ENCODE measurements at regions of chr1 and their contacts with region 1.

Region 1: GRCh38 chr1:150925816-150926741 is at the start of gene SETDB1:
- DNase-seq: peak; percentile 96 to 99 (median 98)
- H3K4me3 ChIP-seq: peak within 1 kb of the TSS; percentile 71 to 88 (median 75)
- H3K4me3 Mint-ChIP-seq: peak within 1 kb of the TSS; percentile 94 to 95
- H3K27ac ChIP-seq: peak within 1 kb of the TSS; percentile 83 to 92
- H3K27ac Mint-ChIP-seq: peak within 1 kb of the TSS; percentile 97 to 99 (median 99)
- H3K4me1 ChIP-seq: peaks cover 19 to 27% of the 10 kb centered on the region in 2 donors
- H3K4me1 Mint-ChIP-seq: peaks cover 27% of the 10 kb centered on the region
- H3K27me3 ChIP-seq: no peaks in the 10 kb centered on the region
- H3K27me3 Mint-ChIP-seq: peaks cover 0 to 3% (median 1%) of the 10 kb centered on the region in 3 donors
- CTCF ChIP-seq: no peak
- polyA plus RNA-seq, gene SETDB1: 13.9 to 69.4 (median 15.5) TPM

Region 2: DNA sequence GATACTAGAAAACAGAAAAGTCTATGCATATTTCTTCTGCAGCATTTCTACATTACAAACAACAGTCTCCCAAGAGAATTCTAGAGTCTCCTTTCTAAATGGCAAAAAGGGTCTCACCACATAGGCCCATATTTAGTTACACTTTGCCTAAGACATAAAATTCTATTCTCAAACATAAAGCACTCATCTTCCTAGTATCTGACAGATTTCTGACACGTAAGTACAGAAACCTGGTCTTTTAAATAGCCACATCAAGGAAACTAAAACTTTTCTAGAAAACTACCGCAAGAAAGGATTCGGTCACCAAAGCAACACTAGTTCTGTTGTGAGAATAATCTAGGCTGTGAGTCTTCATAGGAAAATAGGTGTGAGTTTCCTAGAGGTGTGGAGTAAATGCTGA is 84.5 kb before region 1 on chr1:
- intact Hi-C with region 1: loop called in 1 of 2 experiments (anchors 2 kb)
- DNase-seq: no peak
- H3K4me3 ChIP-seq: no peak overlapping the region
- H3K4me3 Mint-ChIP-seq: no peak overlapping the region
- H3K27ac ChIP-seq: peak overlapping the region in 1 of 2 donors; percentile 58
- H3K27ac Mint-ChIP-seq: peak overlapping the region in 4 of 7 donors; percentile 7 to 33 (median 25)
- H3K4me1 ChIP-seq: peaks cover 34 to 35% of the 10 kb centered on the region in 2 donors
- H3K4me1 Mint-ChIP-seq: peaks cover 37% of the 10 kb centered on the region
- H3K27me3 ChIP-seq: no peaks in the 10 kb centered on the region
- H3K27me3 Mint-ChIP-seq: no peaks in the 10 kb centered on the region
- CTCF ChIP-seq: no peak

Region 3: DNA sequence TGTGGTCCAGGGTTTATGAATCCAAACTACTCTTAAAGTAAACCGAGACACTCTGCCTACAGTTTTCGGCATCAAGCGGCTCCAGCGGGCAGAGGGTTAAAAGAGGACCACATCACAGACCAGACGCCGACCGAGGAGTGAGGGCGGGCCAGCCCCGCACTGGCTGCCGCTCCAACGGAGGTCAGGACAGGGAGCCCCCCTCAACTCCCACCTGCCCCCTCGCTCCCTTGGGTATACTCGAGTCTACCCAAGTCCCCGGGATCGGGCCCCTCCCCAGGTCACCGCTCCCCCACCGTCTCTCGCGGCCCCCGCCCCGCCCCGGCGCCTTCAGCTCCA is 50.0 kb before region 1 on chr1:
- intact Hi-C with region 1: loop called (anchors 2 to 5 kb)
- DNase-seq: peak in 1 of 3 donors; percentile 24
- H3K4me3 ChIP-seq: peak overlapping the region; percentile 95 to 98 (median 98)
- H3K4me3 Mint-ChIP-seq: peak overlapping the region; percentile 86 to 93
- H3K27ac ChIP-seq: peak overlapping the region; percentile 81 to 91
- H3K27ac Mint-ChIP-seq: peak overlapping the region; percentile 90 to 97 (median 94)
- H3K4me1 ChIP-seq: peaks cover 35 to 42% of the 10 kb centered on the region in 2 donors
- H3K4me1 Mint-ChIP-seq: peaks cover 42% of the 10 kb centered on the region
- H3K27me3 ChIP-seq: no peaks in the 10 kb centered on the region
- H3K27me3 Mint-ChIP-seq: peaks cover 0 to 1% (median under 1%) of the 10 kb centered on the region in 3 donors
- CTCF ChIP-seq: no peak

Region 4: DNA sequence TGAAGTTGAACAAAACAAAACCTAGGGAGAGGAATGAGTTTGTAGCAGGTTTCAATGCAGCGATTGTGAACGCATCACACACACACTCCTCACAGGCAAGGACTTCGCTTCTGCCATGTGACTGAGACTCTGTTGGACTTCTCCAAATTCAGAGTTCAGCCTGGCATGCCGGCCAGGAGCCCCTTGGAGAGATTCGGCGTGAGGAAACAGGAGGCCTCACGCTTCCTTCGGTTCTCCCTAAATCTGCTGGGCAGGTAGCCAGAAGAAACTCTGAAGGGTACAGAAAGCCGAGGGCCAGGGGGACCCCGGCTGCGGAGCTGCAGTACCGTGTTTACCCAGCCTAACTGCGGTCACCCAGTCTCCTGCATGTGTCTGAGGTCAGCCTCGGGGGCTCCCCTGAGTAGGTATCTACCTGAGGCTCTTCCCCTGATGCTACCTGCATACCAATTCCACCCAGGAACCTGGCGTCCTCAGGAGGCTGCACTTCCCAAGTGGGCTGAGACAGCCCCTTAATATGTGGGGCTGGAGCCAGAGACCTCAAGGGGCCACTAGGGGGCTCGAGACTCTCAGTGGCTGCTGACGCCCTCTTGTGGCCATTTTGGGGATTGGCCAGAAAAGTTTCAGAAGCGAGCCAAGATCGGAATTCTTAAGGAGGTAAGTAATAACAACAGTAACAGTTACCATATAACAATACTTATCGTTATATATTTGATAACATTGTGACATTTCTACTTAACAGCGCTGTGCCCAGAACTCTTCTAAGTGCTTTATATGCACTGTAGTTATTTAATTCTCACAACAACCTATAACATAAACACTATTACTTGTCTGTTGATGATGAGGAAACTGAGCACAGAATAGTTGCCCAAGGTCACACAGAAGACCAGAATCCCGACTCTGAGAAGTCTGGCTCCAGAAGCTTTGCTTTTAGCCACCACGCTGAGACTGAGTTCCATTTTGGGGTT is 53.3 kb after region 1 on chr1:
- intact Hi-C with region 1: loop called (anchors 5 to 10 kb)
- DNase-seq: peak; percentile 81 to 92 (median 83)
- H3K4me3 ChIP-seq: peak overlapping the region; percentile 49 to 79 (median 67)
- H3K4me3 Mint-ChIP-seq: peak overlapping the region; percentile 74 to 93
- H3K27ac ChIP-seq: peak overlapping the region; percentile 81 to 87
- H3K27ac Mint-ChIP-seq: peak overlapping the region; percentile 91 to 100 (median 99)
- H3K4me1 ChIP-seq: peaks cover 48 to 50% of the 10 kb centered on the region in 2 donors
- H3K4me1 Mint-ChIP-seq: peaks cover 46% of the 10 kb centered on the region
- H3K27me3 ChIP-seq: no peaks in the 10 kb centered on the region
- H3K27me3 Mint-ChIP-seq: no peaks in the 10 kb centered on the region
- CTCF ChIP-seq: peak; percentile 100

Region 5: GRCh38 chr1:151189638-151190445 is 263.8 kb after region 1 on chr1 and contains the start of gene VPS72:
- intact Hi-C with region 1: no loop called
- DNase-seq: peak; percentile 69 to 80 (median 76)
- H3K4me3 ChIP-seq: peak within 1 kb of the TSS; percentile 80 to 98 (median 93)
- H3K4me3 Mint-ChIP-seq: peak within 1 kb of the TSS; percentile 100
- H3K27ac ChIP-seq: peak within 1 kb of the TSS; percentile 75 to 83
- H3K27ac Mint-ChIP-seq: peak within 1 kb of the TSS; percentile 95 to 99 (median 96)
- H3K4me1 ChIP-seq: peaks cover 18 to 23% of the 10 kb centered on the region in 2 donors
- H3K4me1 Mint-ChIP-seq: peaks cover 27% of the 10 kb centered on the region
- H3K27me3 ChIP-seq: no peaks in the 10 kb centered on the region
- H3K27me3 Mint-ChIP-seq: peaks cover 5 to 14% (median 11%) of the 10 kb centered on the region in 3 donors
- CTCF ChIP-seq: no peak
- polyA plus RNA-seq, gene VPS72: 30.4 to 43.3 (median 37.7) TPM

Measured in CD14-positive monocyte (primary cell).